Dendritic cell treated with granulocyte-macrophage colony-stimulating factor and Interleukin-4, amounts not matched to agents 40 ng/mL and 50 ng/mL, for 4 days (primary cell): ENCODE measurements at regions of chr5 and their contacts with region 1.

Region 1: DNA sequence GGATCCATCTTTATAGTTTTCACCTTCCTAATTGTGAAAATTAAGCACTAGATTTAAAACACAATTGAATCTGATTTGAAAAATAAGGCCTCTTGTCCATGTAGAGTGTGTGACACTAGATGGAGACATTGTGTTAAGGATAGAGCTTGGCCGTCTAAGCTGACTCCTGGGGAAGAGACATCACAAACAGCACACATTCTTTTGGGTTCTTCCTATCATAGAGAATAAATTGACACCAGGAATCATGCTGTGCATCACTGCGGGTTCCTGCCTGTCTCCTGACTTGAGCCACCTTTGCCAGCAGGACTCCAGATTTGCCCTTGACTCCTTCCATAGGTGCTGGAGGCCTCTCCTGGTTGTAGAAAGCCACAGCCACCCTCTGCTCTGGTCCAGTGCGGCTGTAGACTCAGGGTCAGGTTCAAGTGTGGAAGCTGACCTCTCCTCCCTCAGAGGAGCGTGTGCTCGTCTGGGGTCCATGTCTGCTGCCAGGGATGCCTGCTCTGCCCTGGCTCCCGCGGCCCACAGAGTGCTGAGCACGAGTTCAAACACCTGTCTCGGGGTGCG is 11.2 kb downstream of the ROPN1L start:
- H3K4me3 Mint-ChIP-seq: no peak overlapping the region
- H3K27ac Mint-ChIP-seq: no peak overlapping the region
- H3K4me1 Mint-ChIP-seq: peaks cover 46% of the 10 kb centered on the region
- H3K27me3 Mint-ChIP-seq: peaks cover 23% of the 10 kb centered on the region

Region 2: GRCh38 chr5:10418654-10419345 is 34.0 kb before region 1 on chr5:
- intact Hi-C with region 1: no loop called
- H3K4me3 Mint-ChIP-seq: no peak overlapping the region
- H3K27ac Mint-ChIP-seq: no peak overlapping the region
- H3K4me1 Mint-ChIP-seq: peaks cover 36% of the 10 kb centered on the region
- H3K27me3 Mint-ChIP-seq: no peaks in the 10 kb centered on the region

Region 3: GRCh38 chr5:10627160-10627701 is 174.4 kb after region 1 on chr5:
- intact Hi-C with region 1: loop called (anchors 1 kb)
- H3K4me3 Mint-ChIP-seq: peak overlapping the region; percentile 59
- H3K27ac Mint-ChIP-seq: peak overlapping the region; percentile 14
- H3K4me1 Mint-ChIP-seq: peaks cover 56% of the 10 kb centered on the region
- H3K27me3 Mint-ChIP-seq: peaks cover 43% of the 10 kb centered on the region

Region 4: DNA sequence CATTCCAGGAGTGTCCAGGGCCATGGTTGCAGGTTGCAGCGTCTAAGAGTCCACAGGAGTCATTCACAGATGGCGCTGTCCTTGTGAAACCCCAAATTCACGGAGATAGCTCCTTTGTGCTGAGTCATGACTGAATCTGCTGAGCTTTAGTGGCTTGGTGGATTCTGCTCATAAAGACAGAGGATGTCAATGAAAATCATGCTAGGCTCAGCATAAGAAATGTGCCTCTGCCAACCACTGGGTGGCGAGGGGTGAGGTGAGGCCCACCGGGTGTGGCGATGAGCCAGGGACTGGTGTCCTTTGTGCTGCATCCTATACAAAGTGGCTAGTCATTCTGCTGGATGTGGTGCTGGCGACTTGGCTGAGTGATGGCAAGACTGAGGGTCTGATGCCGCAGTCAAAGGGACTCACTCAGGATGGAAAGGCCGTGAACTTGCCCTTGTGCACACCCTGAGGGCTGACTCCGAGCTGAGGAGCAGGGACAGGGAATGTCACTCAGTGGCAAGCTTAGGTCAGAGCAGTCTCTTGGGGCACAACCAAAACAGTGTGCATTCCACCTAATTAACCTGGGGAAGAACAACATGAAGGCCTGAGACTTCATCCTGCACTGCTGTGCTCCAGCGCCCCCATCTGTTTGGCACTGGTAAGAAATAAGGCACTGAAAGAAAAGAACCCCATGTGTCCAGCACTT is 236.7 kb after region 1 on chr5:
- intact Hi-C with region 1: loop called (anchors 5 kb)
- H3K4me3 Mint-ChIP-seq: no peak overlapping the region
- H3K27ac Mint-ChIP-seq: peak overlapping the region; percentile 64
- H3K4me1 Mint-ChIP-seq: peaks cover 33% of the 10 kb centered on the region
- H3K27me3 Mint-ChIP-seq: no peaks in the 10 kb centered on the region

Region 5: DNA sequence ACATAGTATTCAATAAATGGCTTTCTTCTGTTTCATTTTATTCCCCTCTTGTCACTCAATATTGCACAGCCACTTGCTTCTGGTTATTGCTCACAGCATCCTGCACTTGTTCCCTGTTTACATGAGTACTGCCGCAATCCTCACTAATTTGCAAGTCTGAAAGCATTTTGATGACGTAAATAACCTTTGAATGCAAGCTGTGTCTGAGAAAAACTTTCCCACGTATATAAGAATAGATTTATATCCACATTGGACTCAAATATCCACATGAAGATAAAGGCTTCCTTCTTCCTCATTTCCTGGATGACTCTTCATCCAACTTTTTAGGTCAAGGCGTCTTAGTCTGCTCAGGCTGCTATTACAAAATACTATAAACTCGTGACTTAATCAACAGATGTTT is 396.4 kb after region 1 on chr5:
- intact Hi-C with region 1: loop called (anchors 10 kb)
- H3K4me3 Mint-ChIP-seq: no peak overlapping the region
- H3K27ac Mint-ChIP-seq: no peak overlapping the region
- H3K4me1 Mint-ChIP-seq: peaks cover 31% of the 10 kb centered on the region
- H3K27me3 Mint-ChIP-seq: no peaks in the 10 kb centered on the region